Colonic mucosa (tissue), 4 donors: ENCODE measurements at regions of chr1 and their contacts with region 1.

Region 1: DNA sequence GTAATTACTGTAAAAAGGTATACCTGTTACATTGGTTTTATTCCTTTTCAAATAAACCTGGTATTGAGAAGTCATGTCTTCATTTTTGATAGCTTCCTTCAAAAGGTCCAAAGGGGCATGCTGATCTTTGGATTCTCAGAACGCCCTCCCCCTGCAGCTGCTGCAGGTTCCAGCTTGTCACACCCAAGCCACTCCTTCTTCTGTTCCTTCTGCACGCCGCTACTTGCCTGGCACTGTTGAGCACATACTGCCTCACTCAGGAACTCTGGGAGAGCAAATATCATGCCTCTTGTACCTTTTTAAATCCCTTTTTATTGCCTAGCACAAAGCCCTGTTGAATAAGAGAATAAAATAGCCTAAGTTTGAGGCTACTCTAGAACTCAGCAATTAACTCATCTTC is 136.9 kb downstream of the BARHL2 start:
- DNase-seq: peak; percentile 43
- H3K4me3 ChIP-seq: no peak overlapping the region
- H3K27ac ChIP-seq: no peak overlapping the region
- H3K4me1 ChIP-seq: no peaks in the 10 kb centered on the region
- H3K27me3 ChIP-seq: no peaks in the 10 kb centered on the region
- CTCF ChIP-seq: no peak

Region 2: GRCh38 chr1:90127288-90127953 is 452.8 kb before region 1 on chr1:
- intact Hi-C with region 1: loop called (anchors 10 kb)
- DNase-seq: no peak
- H3K4me3 ChIP-seq: no peak overlapping the region
- H3K27ac ChIP-seq: no peak overlapping the region
- H3K4me1 ChIP-seq: no peaks in the 10 kb centered on the region
- H3K27me3 ChIP-seq: no peaks in the 10 kb centered on the region
- CTCF ChIP-seq: no peak

Region 3: DNA sequence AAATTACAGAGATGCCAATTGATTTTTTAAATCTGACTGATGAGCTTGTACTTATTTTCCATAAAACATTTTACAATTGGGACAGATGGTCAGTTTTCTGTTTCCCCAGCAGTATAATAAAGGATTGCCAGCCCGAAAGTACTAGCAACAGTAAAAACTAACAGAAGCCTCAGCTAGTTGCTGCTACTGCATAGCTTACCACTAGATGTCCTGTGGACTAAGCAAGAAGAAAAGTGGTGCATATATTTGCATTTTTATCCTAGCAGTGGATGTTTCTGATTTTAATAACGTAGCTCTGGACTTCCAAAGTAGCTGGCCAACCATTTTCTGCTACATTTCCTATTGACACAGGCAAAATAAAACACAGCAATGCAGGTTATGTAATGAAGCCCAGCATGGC is 104.5 kb before region 1 on chr1:
- intact Hi-C with region 1: no loop called
- DNase-seq: no peak
- H3K4me3 ChIP-seq: no peak overlapping the region
- H3K27ac ChIP-seq: no peak overlapping the region
- H3K4me1 ChIP-seq: no peaks in the 10 kb centered on the region
- H3K27me3 ChIP-seq: no peaks in the 10 kb centered on the region
- CTCF ChIP-seq: no peak